Activated CD8-positive, alpha-beta memory T cell treated with anti-CD3 and anti-CD28 coated beads, Interleukin-2, amount 10 ng/mL, durations not matched to agents 7 days and 5 days (primary cell): ENCODE measurements at regions of chr1 and their contacts with region 1.

Region 1: GRCh38 chr1:202160377-202160940 is at the start of gene PTPN7:
- DNase-seq: peak; percentile 87
- ATAC-seq: peak; percentile 38
- H3K4me3 Mint-ChIP-seq: peak within 1 kb of the TSS; percentile 98
- H3K27ac Mint-ChIP-seq: peak within 1 kb of the TSS; percentile 99
- H3K4me1 Mint-ChIP-seq: peaks cover 76% of the 10 kb centered on the region
- H3K27me3 Mint-ChIP-seq: no peaks in the 10 kb centered on the region
- total RNA-seq, gene PTPN7: 228 to 410 TPM

Region 2: DNA sequence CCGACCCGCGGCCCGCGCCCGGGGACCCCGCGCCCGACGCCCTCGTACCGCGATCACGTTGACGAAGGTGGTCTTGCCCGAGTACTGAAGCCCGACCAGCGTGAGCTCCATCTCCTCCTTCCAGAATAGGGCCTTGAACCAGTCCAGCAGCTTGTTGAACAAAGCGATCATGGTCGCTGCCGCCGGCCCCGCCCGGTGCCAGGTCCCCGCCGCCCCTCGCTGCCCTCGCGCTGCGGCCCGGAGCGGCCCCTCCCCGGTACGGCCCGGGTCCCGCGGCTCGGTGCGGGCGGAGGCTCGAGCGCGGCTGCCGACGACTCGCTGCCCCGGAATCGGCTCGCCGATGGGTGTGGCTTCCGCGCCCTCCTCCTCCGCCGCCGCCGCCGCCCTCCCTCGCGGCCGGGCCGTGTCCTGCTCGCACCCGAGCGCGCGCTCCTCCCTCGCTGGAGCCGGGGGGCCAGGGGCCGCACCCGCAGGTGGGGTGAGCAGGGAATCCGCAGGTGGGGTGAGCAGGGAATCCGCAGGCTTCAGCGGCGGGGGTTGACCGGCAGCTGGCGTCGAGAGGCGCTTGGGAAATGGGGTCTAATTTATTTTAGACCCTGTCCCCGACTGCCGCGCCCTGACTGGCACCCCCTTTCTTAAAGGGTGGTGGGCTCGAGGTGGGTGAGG is 15.9 kb before region 1 on chr1 and contains the start of gene ARL8A:
- CTCF ChIA-PET with region 1: interaction called, 24 read pairs
- DNase-seq: peak; percentile 79
- ATAC-seq: peak; percentile 84
- H3K4me3 Mint-ChIP-seq: peak within 1 kb of the TSS; percentile 85
- H3K27ac Mint-ChIP-seq: peak within 1 kb of the TSS; percentile 90
- H3K4me1 Mint-ChIP-seq: peaks cover 41% of the 10 kb centered on the region
- H3K27me3 Mint-ChIP-seq: no peaks in the 10 kb centered on the region
- total RNA-seq, gene ARL8A: 50.0 to 68.9 TPM

Region 3: DNA sequence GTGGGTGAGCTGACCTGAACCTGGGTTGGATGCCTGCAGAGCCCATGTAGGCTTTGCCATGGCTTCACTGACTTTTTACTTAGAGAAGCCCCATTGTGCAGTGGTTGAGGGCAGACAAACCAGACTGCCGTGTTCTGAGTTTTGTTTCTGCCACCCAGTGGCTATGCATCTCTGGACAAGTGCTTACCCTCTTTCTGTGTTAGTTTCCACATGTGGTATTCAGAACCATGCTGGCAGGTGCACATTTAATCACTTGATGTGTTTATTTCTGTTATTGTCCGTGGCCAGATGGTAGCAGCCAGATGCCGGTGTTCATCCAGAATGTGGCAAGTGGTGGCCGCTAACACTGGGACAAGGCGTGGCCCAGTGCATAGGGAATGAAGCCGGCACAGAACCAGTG is 10.3 kb after region 1 on chr1:
- CTCF ChIA-PET with region 1: interaction called, 26 read pairs
- DNase-seq: no peak
- ATAC-seq: no peak
- H3K4me3 Mint-ChIP-seq: no peak overlapping the region
- H3K27ac Mint-ChIP-seq: no peak overlapping the region
- H3K4me1 Mint-ChIP-seq: peaks cover 20% of the 10 kb centered on the region
- H3K27me3 Mint-ChIP-seq: no peaks in the 10 kb centered on the region

Region 4: DNA sequence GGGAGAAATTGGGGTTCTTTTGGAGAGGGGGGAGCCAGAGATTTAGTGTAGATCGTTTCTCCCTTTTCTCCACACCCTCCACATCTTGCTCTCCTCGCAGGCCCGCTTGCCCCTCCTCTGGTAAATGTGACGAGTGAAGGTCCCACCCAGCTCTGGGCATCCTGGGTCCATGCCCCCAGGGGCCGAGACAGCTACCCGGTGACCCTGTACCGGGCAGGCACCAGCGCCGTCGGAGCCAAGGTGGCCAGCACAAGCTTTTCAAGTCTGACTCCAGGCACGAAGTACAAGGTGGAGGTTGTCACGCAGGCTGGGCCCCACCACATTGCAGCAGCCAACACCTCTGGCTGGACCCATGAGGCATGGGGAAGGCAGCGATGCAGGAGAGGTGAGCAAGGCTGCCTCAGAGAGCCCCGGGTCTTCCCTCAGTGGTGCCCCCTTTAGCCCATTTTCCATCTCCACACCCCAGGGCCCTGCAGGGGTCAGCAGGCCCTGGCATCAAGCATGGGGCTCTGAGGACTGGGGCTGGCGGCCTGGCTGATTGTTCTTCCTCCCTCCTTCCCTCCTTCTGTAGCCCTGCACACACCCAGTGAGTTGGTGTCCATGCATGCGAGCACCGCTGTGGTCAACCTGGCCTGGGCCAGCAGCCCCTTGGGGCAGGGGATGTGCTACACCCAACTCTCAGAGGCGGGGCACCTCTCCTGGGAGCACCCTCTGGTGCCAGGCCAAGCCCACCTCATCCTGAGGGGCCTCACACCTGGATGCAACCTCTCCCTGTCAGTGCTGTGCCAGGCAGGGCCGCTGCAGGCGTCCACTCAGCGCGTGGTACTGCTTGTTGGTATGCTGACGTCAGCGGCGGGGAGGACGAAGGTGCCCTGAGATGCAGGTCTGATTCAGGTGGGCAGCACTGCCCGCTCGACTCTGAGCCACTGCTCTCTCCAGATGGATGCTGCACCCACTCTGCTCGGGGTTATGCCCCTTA is 16.8 kb after region 1 on chr1:
- CTCF ChIA-PET with region 1: interaction called, 32 read pairs
- DNase-seq: no peak
- ATAC-seq: no peak
- H3K4me3 Mint-ChIP-seq: no peak overlapping the region
- H3K27ac Mint-ChIP-seq: no peak overlapping the region
- H3K4me1 Mint-ChIP-seq: peaks cover 3% of the 10 kb centered on the region
- H3K27me3 Mint-ChIP-seq: no peaks in the 10 kb centered on the region

Region 5: GRCh38 chr1:202184750-202185460 is 24.4 kb after region 1 on chr1:
- CTCF ChIA-PET with region 1: interaction called, 32 read pairs
- DNase-seq: peak; percentile 78
- ATAC-seq: peak; percentile 67
- H3K4me3 Mint-ChIP-seq: no peak overlapping the region
- H3K27ac Mint-ChIP-seq: no peak overlapping the region
- H3K4me1 Mint-ChIP-seq: peaks cover 7% of the 10 kb centered on the region
- H3K27me3 Mint-ChIP-seq: peaks cover 2% of the 10 kb centered on the region

Region 6: GRCh38 chr1:202210385-202210784 is 49.9 kb after region 1 on chr1:
- CTCF ChIA-PET with region 1: no interaction called
- DNase-seq: peak; percentile 53
- ATAC-seq: peak; percentile 53
- H3K4me3 Mint-ChIP-seq: no peak overlapping the region
- H3K27ac Mint-ChIP-seq: no peak overlapping the region
- H3K4me1 Mint-ChIP-seq: peaks cover 5% of the 10 kb centered on the region
- H3K27me3 Mint-ChIP-seq: peaks cover 42% of the 10 kb centered on the region